Left lung (tissue), 14 donors: ENCODE measurements at regions of chr9 and their contacts with region 1.

Region 1: GRCh38 chr9:136858844-136859757 is 7.0 kb downstream of the MAMDC4 start:
- DNase-seq: peak in 2 of 4 donors; percentile 53 to 84
- ATAC-seq: peak; percentile 65
- H3K4me3 ChIP-seq: no peak overlapping the region
- H3K27ac ChIP-seq: no peak overlapping the region
- H3K4me1 ChIP-seq: peaks cover 0 to 11% of the 10 kb centered on the region in 2 donors
- H3K27me3 ChIP-seq: no peaks in the 10 kb centered on the region
- CTCF ChIP-seq: no peak

Region 2: DNA sequence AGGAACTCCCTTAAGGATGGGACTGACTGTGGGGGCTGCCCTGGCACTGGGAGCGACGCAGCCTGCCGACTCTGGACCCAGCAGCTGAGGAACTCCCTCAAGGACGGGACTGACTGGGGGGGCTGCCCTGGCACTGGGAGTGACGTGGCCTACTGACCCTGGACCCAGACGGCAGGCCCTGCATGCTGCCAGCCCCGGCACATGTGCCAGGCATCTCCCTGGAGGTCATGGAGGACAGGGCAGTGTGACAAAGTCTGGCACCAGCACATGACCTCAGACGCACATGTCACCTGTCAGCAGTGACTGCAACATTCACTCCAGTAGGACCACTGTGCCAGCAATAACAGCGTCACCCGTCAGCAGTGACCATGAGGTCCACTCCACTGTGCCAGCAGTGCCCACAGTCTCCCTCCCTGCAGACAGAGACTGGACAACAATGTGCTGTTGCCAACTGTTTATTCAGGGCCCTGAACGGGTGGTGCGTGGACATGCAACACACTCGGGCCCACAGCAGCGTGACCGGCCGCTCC is 81.0 kb after region 1 on chr9:
- intact Hi-C with region 1: loop called in 1 of 2 experiments (anchors 10 kb)
- DNase-seq: peak in 1 of 4 donors; percentile 25
- ATAC-seq: no peak
- H3K4me3 ChIP-seq: no peak overlapping the region
- H3K27ac ChIP-seq: no peak overlapping the region
- H3K4me1 ChIP-seq: peaks cover 2 to 30% of the 10 kb centered on the region in 2 donors
- H3K27me3 ChIP-seq: no peaks in the 10 kb centered on the region
- CTCF ChIP-seq: no peak